Mammary epithelial cell (primary cell): ENCODE measurements at regions of chr7 and their contacts with region 1.

Region 1: DNA sequence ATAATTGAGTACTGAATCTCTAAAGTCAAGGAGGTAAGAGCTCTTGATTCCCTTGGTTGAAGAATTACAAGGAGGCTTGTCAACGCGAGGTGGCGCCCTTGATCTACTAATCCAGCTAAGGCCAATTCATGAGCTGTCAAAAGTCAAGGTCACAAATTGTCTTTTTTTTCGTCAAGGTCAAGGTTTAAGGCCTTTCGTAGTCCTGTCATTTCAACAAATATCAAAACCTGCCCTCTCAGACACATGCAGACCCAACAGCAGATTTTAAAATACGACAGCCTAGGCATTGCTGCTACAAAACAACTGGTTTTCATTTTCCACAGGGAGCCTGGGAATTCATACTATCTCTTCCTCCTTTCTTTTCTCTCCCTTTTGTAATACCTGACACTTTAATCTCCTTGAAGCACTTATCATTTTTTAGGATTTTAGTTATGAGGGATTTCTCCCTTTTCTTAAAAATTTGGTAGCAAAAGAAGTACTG is 3.6 kb downstream of the HOXA13 start:
- DNase-seq: peak; percentile 37
- H3K4me3 ChIP-seq: no peak overlapping the region
- H3K27ac ChIP-seq: no peak overlapping the region
- H3K4me1 ChIP-seq: peaks cover 28% of the 10 kb centered on the region
- H3K27me3 ChIP-seq: peaks cover 79% of the 10 kb centered on the region
- CTCF ChIP-seq: peak; percentile 74 to 85

Region 2: DNA sequence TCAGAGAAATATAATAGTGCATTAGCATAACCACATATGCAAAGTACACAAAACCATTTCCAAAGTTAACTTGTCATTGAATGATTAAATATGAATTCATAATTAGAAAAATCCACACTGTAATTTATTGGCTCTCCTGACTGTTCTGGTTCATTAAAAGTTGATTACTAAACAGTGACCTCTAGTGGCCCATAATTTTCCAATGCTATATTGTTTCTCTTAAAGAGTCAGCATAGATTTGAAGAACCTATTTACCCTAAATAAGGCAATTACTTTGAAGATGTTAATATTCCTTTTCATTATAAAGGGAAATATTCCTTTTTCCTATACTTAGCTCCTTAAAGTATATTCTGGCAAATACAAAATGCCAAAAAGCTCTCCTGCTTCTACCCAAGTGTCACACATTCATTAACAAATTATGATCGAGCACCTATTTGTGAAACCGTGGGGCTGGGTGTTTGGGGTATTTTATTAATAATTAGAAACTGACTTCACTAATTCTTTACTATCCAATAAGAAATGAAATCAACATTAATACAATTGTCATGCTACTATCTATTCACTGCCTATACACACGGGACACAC is 380.1 kb after region 1 on chr7:
- CTCF ChIA-PET with region 1: no interaction called
- dilution Hi-C with region 1: loop called (anchors 25 kb)
- in situ Hi-C with region 1: loop called (anchors 10 kb)
- intact Hi-C with region 1: loop called (anchors 2 kb)
- DNase-seq: peak; percentile 20
- H3K4me3 ChIP-seq: no peak overlapping the region
- H3K27ac ChIP-seq: no peak overlapping the region
- H3K4me1 ChIP-seq: no peaks in the 10 kb centered on the region
- H3K27me3 ChIP-seq: no peaks in the 10 kb centered on the region
- CTCF ChIP-seq: peak; percentile 49 to 50

Region 3: GRCh38 chr7:27605689-27606269 is 409.5 kb after region 1 on chr7:
- CTCF ChIA-PET with region 1: interaction called, 19 read pairs
- dilution Hi-C with region 1: no loop called
- in situ Hi-C with region 1: no loop called
- intact Hi-C with region 1: loop called (anchors 1 kb)
- DNase-seq: peak; percentile 23
- H3K4me3 ChIP-seq: no peak overlapping the region
- H3K27ac ChIP-seq: no peak overlapping the region
- H3K4me1 ChIP-seq: peaks cover 1% of the 10 kb centered on the region
- H3K27me3 ChIP-seq: no peaks in the 10 kb centered on the region
- CTCF ChIP-seq: peak; percentile 49 to 60

Region 4: GRCh38 chr7:27739909-27740448 is 543.7 kb after region 1 on chr7 and contains the start of gene TAX1BP1:
- CTCF ChIA-PET with region 1: interaction called, 9 read pairs
- dilution Hi-C with region 1: no loop called
- in situ Hi-C with region 1: no loop called
- intact Hi-C with region 1: loop called (anchors 1 kb)
- DNase-seq: peak; percentile 92
- H3K4me3 ChIP-seq: peak within 1 kb of the TSS; percentile 80 to 97 (median 96)
- H3K27ac ChIP-seq: peak within 1 kb of the TSS; percentile 96
- H3K4me1 ChIP-seq: peaks cover 11% of the 10 kb centered on the region
- H3K27me3 ChIP-seq: no peaks in the 10 kb centered on the region
- CTCF ChIP-seq: no peak
- total RNA-seq, gene TAX1BP1: 84.1 to 93.5 TPM

Region 5: GRCh38 chr7:27921081-27921836 is 724.9 kb after region 1 on chr7:
- CTCF ChIA-PET with region 1: interaction called, 3 read pairs
- dilution Hi-C with region 1: no loop called
- in situ Hi-C with region 1: loop called in 1 of 2 experiments (anchors 10 kb)
- intact Hi-C with region 1: loop called (anchors 1 kb)
- DNase-seq: peak; percentile 56
- H3K4me3 ChIP-seq: no peak overlapping the region
- H3K27ac ChIP-seq: no peak overlapping the region
- H3K4me1 ChIP-seq: peaks cover 23% of the 10 kb centered on the region
- H3K27me3 ChIP-seq: no peaks in the 10 kb centered on the region
- CTCF ChIP-seq: peak; percentile 32 to 55

Region 6: DNA sequence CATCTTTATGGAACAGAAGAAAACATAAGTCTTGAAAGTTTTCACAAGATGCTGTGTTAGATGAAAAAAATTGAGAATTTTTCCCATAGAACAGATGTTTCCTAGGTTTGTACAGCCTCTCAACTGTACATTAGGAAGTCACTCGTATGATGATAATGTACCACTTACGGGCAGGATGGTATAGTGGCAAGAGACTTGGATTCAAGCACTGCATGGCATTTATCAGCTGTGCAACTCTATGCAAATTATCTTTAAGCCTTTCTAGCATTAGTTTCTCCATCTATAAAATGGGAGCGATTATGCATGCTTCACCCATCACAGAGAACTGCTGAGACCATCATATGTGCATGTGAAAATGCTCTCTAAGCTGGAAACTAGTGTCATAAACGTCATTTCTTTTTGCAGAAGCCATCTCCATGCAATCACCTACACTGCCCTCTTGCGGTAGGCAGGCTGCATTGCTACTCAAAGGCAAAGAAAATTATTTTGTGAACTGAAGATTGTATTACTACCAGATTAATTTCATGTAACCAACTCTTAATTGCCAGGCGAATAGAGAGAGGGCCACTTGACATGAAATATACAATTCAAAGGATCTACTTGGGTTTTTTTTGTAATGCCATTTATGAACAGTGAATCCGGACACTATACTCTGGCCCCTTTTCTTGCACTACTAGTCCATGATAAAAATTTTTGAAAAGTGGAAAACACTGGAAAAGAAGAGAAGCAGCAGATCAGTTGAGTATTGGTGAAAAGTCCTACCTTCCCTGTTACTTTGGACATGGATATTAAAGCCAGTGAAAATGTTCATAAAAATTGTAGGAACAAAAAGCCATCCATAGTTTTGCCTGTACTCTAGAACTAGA is 881.9 kb after region 1 on chr7:
- CTCF ChIA-PET with region 1: no interaction called
- dilution Hi-C with region 1: no loop called
- in situ Hi-C with region 1: loop called (anchors 10 to 25 kb)
- intact Hi-C with region 1: loop called (anchors 1 kb)
- DNase-seq: peak; percentile 24
- H3K4me3 ChIP-seq: no peak overlapping the region
- H3K27ac ChIP-seq: no peak overlapping the region
- H3K4me1 ChIP-seq: no peaks in the 10 kb centered on the region
- H3K27me3 ChIP-seq: no peaks in the 10 kb centered on the region
- CTCF ChIP-seq: peak; percentile 98 to 100

Region 7: GRCh38 chr7:28926871-28927597 is 1730.7 kb after region 1 on chr7:
- CTCF ChIA-PET with region 1: no interaction called
- dilution Hi-C with region 1: no loop called
- in situ Hi-C with region 1: no loop called
- intact Hi-C with region 1: loop called (anchors 10 kb)
- DNase-seq: peak; percentile 74
- H3K4me3 ChIP-seq: peak overlapping the region; percentile 52 to 59 (median 58)
- H3K27ac ChIP-seq: no peak overlapping the region
- H3K4me1 ChIP-seq: peaks cover 5% of the 10 kb centered on the region
- H3K27me3 ChIP-seq: no peaks in the 10 kb centered on the region
- CTCF ChIP-seq: peak; percentile 76 to 77